Breast epithelium (tissue), 4 donors: ENCODE measurements at regions of chr17 and their contacts with region 1.

Region 1: DNA sequence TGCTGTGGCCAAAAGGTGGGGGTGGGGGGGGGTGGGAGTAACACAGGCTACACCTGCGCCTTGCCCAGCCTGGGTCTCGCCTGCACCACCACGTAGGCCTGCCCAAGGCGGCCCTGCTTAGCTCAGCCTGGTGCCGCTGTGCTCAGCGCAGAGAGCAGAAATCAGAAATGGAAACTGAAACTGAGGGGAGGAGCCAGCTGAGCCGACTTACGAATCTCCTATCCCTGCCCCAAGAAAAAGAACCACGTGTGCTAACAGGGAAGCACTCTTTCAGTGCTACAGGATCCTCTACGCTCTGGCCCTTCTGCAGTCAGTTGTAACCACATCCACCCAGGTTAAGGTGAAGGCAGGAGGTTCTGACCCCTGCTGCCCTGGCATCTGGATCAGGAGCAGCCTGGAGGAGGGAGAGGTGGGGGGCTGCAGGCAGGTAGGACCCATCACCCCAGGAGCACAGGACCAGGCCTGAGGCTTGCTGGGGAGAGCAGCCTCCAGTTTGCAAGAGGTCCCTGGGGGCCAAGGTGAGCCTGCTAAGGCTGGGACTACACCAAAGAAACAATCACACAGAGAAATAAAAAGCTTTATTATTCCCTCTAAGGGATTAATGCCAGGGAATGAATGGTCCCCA is at the start of gene DHX58:
- DNase-seq: peak in 1 of 2 donors; percentile 73
- H3K4me3 ChIP-seq: peak within 1 kb of the TSS; percentile 57 to 82 (median 66)
- H3K27ac ChIP-seq: peak within 1 kb of the TSS; percentile 91
- H3K4me1 ChIP-seq: peaks cover 6 to 9% of the 10 kb centered on the region in 2 donors
- H3K27me3 ChIP-seq: no peaks in the 10 kb centered on the region
- CTCF ChIP-seq: no peak
- POLR2A ChIP-seq: no peak
- total RNA-seq, gene DHX58: 13.1 to 22.8 (median 13.4) TPM

Region 2: GRCh38 chr17:42027961-42028790 is 84.5 kb before region 1 on chr17:
- intact Hi-C with region 1: loop called (anchors 5 kb)
- DNase-seq: no peak
- H3K4me3 ChIP-seq: no peak overlapping the region
- H3K27ac ChIP-seq: no peak overlapping the region
- H3K4me1 ChIP-seq: peaks cover 3 to 7% of the 10 kb centered on the region in 2 donors
- H3K27me3 ChIP-seq: no peaks in the 10 kb centered on the region
- CTCF ChIP-seq: no peak
- POLR2A ChIP-seq: no peak